ENCODE measurements at regions of chr6 and their contacts with region 1.

Region 1: DNA sequence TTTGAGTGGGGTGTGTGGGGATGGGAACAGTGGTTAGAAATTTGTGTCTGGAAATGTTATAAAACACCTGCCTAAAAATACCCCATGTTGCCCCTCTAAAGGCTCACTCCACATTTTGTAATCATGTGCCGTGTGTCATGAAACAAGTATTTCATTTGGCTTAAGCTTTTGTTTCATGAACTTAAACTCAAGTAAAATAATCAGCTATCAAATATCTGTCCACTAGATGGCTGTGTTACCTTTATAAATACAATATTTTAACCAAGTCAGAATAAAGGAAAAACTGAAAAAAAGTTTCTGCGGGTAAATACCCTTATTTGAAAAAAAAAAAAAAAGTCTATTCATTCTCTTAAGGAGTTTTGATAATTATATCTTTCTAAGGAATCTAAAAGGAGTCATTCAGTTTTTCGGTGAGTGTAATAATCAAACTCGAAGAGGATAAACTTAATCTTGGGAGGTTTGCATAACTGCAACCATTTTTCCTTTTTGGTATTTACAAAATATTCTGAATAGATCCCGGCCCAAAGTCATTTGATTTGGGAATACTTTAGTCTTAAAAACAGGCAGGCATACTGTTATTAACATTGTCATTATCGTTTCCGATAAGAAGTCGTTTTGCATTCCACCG is 29.9 kb upstream of the MTRF1L start:
- DNase-seq: peak; percentile 19
- H3K4me3 ChIP-seq: no peak overlapping the region
- H3K27ac ChIP-seq: peak overlapping the region; percentile 49
- H3K4me1 ChIP-seq: peaks cover 16% of the 10 kb centered on the region
- H3K27me3 ChIP-seq: no peaks in the 10 kb centered on the region
- CTCF ChIP-seq: peak; percentile 38 to 40

Region 2: GRCh38 chr6:153108315-153108714 is 75.9 kb after region 1 on chr6:
- CTCF ChIA-PET with region 1: no interaction called
- dilution Hi-C with region 1: no loop called
- in situ Hi-C with region 1: no loop called
- intact Hi-C with region 1: loop called (anchors 1 kb)
- DNase-seq: no peak
- H3K4me3 ChIP-seq: no peak overlapping the region
- H3K27ac ChIP-seq: no peak overlapping the region
- H3K4me1 ChIP-seq: no peaks in the 10 kb centered on the region
- H3K27me3 ChIP-seq: no peaks in the 10 kb centered on the region
- CTCF ChIP-seq: peak; percentile 24 to 57

Region 3: DNA sequence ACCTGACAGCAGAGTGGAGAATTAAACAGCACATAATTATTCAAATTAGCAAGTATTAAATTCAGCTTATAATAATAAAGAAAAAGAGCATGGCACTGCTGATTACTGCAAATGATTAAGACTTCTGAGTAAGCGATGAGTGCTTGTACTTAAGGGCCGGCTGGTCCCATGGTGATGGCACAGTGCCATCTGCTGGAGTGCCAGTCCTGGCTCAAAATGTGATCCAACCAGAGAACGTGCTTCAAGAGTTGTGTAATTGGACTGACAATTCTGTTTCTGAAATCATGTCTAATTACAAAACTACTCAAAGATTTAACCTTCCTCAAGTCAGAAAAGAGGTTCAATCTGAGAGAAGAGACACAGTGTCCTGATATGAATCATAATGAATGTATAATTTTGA is 280.3 kb after region 1 on chr6:
- CTCF ChIA-PET with region 1: interaction called, 15 read pairs
- dilution Hi-C with region 1: no loop called
- in situ Hi-C with region 1: no loop called
- intact Hi-C with region 1: loop called (anchors 1 kb)
- DNase-seq: peak; percentile 68
- H3K4me3 ChIP-seq: no peak overlapping the region
- H3K27ac ChIP-seq: no peak overlapping the region
- H3K4me1 ChIP-seq: no peaks in the 10 kb centered on the region
- H3K27me3 ChIP-seq: peaks cover 1% of the 10 kb centered on the region
- CTCF ChIP-seq: peak; percentile 43 to 56

Region 4: DNA sequence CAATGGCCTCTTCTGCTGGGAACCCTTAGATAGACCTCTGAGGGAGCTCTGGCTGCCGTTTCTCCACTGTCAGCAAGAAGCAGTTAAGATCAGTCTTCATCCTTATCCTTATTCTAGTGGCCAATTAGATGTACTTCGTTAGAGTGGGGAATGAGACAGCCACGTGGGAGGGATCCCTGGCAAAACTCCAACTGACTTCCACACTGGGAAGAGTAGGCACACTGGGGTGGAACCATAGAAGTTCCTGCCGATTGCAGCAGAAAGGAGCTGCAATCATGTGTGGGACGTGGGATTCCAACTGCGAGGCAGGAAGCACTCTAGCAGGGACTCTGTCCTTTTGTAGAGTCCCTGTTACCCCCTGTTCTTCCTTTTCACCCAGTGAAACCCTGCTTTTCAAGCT is 325.0 kb after region 1 on chr6:
- CTCF ChIA-PET with region 1: no interaction called
- dilution Hi-C with region 1: no loop called
- in situ Hi-C with region 1: no loop called
- intact Hi-C with region 1: no loop called
- DNase-seq: no peak
- H3K4me3 ChIP-seq: no peak overlapping the region
- H3K27ac ChIP-seq: no peak overlapping the region
- H3K4me1 ChIP-seq: no peaks in the 10 kb centered on the region
- H3K27me3 ChIP-seq: no peaks in the 10 kb centered on the region
- CTCF ChIP-seq: no peak

Region 5: GRCh38 chr6:153392156-153392555 is 359.8 kb after region 1 on chr6:
- CTCF ChIA-PET with region 1: no interaction called
- dilution Hi-C with region 1: no loop called
- in situ Hi-C with region 1: no loop called
- intact Hi-C with region 1: loop called (anchors 5 kb)
- DNase-seq: peak; percentile 3
- H3K4me3 ChIP-seq: no peak overlapping the region
- H3K27ac ChIP-seq: no peak overlapping the region
- H3K4me1 ChIP-seq: no peaks in the 10 kb centered on the region
- H3K27me3 ChIP-seq: no peaks in the 10 kb centered on the region
- CTCF ChIP-seq: no peak

Region 6: GRCh38 chr6:153511896-153512496 is 479.6 kb after region 1 on chr6:
- CTCF ChIA-PET with region 1: no interaction called
- dilution Hi-C with region 1: no loop called
- in situ Hi-C with region 1: loop called in 1 of 2 experiments (anchors 25 kb)
- intact Hi-C with region 1: loop called (anchors 2 kb)
- DNase-seq: peak; percentile 25
- H3K4me3 ChIP-seq: no peak overlapping the region
- H3K27ac ChIP-seq: no peak overlapping the region
- H3K4me1 ChIP-seq: no peaks in the 10 kb centered on the region
- H3K27me3 ChIP-seq: no peaks in the 10 kb centered on the region
- CTCF ChIP-seq: peak; percentile 52 to 70